OCI-LY7 (cell line): ENCODE measurements at regions of chr14 and their contacts with region 1.

Region 1: GRCh38 chr14:22432348-22432976 is 156.6 kb downstream of the DAD1 start:
- DNase-seq: peak; percentile 94
- H3K4me3 ChIP-seq: peak overlapping the region; percentile 61
- H3K27ac ChIP-seq: peak overlapping the region; percentile 97
- H3K4me1 ChIP-seq: peaks cover 88% of the 10 kb centered on the region
- CTCF ChIP-seq: no peak

Region 2: GRCh38 chr14:22412926-22413411 is 19.5 kb before region 1 on chr14:
- CTCF ChIA-PET with region 1: interaction called, 7 read pairs
- POLR2A ChIA-PET with region 1: interaction called, 59 read pairs
- intact Hi-C with region 1: loop called (anchors 1 kb)
- DNase-seq: no peak
- H3K4me3 ChIP-seq: no peak overlapping the region
- H3K27ac ChIP-seq: no peak overlapping the region
- H3K4me1 ChIP-seq: peaks cover 38% of the 10 kb centered on the region
- CTCF ChIP-seq: no peak

Region 3: GRCh38 chr14:22418631-22419030 is 13.8 kb before region 1 on chr14:
- CTCF ChIA-PET with region 1: interaction called, 10 read pairs
- POLR2A ChIA-PET with region 1: interaction called, 59 read pairs
- intact Hi-C with region 1: loop called (anchors 1 kb)
- DNase-seq: peak; percentile 74
- H3K4me3 ChIP-seq: peak overlapping the region; percentile 26
- H3K27ac ChIP-seq: peak overlapping the region; percentile 78
- H3K4me1 ChIP-seq: peaks cover 61% of the 10 kb centered on the region
- CTCF ChIP-seq: no peak

Region 4: DNA sequence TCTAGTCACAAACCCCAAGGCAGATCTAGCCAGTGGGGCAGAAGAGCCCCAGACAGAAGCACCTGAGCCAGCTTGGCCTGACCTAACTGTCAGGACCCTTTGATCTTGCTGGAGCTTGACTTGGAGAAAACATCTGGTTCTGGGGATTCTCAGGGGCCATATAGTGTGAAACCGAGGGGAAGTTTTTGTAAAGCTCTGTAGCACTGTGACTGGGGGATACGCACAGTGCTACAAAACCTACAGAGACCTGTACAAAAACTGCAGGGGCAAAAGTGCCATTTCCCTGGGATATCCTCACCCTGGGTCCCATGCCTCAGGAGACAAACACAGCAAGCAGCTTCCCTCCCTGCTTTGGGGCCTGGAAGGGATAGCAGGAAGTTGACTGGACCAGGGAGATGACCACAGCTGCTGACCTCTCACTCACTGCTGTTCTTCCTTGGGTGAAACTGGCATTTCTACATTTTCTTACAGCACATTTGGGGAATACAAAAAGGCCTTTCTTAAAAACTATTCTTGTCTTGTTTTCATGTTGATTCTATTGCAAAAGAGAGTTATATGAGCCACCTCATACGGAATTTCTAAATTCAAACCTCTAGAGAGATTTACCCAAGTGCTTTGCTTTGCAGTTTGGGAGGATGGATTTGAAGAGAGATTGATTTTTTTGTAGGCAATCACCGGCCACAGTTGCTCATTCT is 16.6 kb after region 1 on chr14:
- CTCF ChIA-PET with region 1: interaction called, 10 read pairs
- POLR2A ChIA-PET with region 1: interaction called, 205 read pairs
- intact Hi-C with region 1: loop called (anchors 2 kb)
- DNase-seq: peak; percentile 73
- H3K4me3 ChIP-seq: peak overlapping the region; percentile 1
- H3K27ac ChIP-seq: peak overlapping the region; percentile 81
- H3K4me1 ChIP-seq: peaks cover 48% of the 10 kb centered on the region
- CTCF ChIP-seq: no peak

Region 5: GRCh38 chr14:22464422-22465142 is 32.1 kb after region 1 on chr14:
- CTCF ChIA-PET with region 1: no interaction called
- POLR2A ChIA-PET with region 1: interaction called, 28 read pairs
- intact Hi-C with region 1: no loop called
- DNase-seq: no peak
- H3K4me3 ChIP-seq: no peak overlapping the region
- H3K27ac ChIP-seq: no peak overlapping the region
- H3K4me1 ChIP-seq: peaks cover 73% of the 10 kb centered on the region
- CTCF ChIP-seq: no peak

Region 6: DNA sequence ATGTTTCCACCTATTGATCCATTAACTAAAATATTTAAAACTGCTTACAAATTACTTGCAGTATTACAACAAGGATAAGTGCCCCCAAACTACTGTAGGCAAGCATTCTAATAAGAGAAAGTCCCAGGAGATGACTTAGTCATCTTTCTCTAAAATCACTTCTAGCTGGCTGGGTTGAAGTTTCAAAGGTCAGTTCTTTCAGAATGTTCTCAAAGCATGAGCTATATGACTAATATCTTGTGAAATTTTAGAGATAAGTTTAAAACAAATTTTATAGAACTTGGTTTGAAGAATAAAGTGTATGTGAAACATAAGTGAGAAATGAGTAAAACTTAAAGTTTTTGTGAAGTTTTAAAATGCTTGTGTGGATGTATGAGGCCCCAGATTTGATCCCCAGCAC is 236.0 kb after region 1 on chr14:
- CTCF ChIA-PET with region 1: no interaction called
- POLR2A ChIA-PET with region 1: no interaction called
- intact Hi-C with region 1: no loop called
- DNase-seq: no peak
- H3K4me3 ChIP-seq: no peak overlapping the region
- H3K27ac ChIP-seq: no peak overlapping the region
- H3K4me1 ChIP-seq: no peaks in the 10 kb centered on the region
- CTCF ChIP-seq: no peak